ENCODE measurements at regions of chr5 and their contacts with region 1.

Region 1: GRCh38 chr5:139574641-139575312 is 13.6 kb downstream of the UBE2D2 start:
- DNase-seq: no peak
- H3K4me3 Mint-ChIP-seq: no peak overlapping the region
- H3K27ac Mint-ChIP-seq: no peak overlapping the region
- H3K4me1 Mint-ChIP-seq: peaks cover 74% of the 10 kb centered on the region
- H3K27me3 Mint-ChIP-seq: no peaks in the 10 kb centered on the region

Region 2: GRCh38 chr5:139501381-139501780 is 73.4 kb before region 1 on chr5:
- CTCF ChIA-PET with region 1: no interaction called
- intact Hi-C with region 1: no loop called
- DNase-seq: no peak
- H3K4me3 Mint-ChIP-seq: no peak overlapping the region
- H3K27ac Mint-ChIP-seq: no peak overlapping the region
- H3K4me1 Mint-ChIP-seq: no peaks in the 10 kb centered on the region
- H3K27me3 Mint-ChIP-seq: no peaks in the 10 kb centered on the region

Region 3: GRCh38 chr5:139588962-139589361 is 14.2 kb after region 1 on chr5:
- CTCF ChIA-PET with region 1: interaction called, 8 read pairs
- intact Hi-C with region 1: loop called (anchors 1 kb)
- DNase-seq: no peak
- H3K4me3 Mint-ChIP-seq: no peak overlapping the region
- H3K27ac Mint-ChIP-seq: no peak overlapping the region
- H3K4me1 Mint-ChIP-seq: peaks cover 67% of the 10 kb centered on the region
- H3K27me3 Mint-ChIP-seq: no peaks in the 10 kb centered on the region

Region 4: GRCh38 chr5:139611703-139612584 is 37.2 kb after region 1 on chr5:
- CTCF ChIA-PET with region 1: interaction called, 3 read pairs
- intact Hi-C with region 1: loop called (anchors 1 kb)
- DNase-seq: peak; percentile 64
- H3K4me3 Mint-ChIP-seq: no peak overlapping the region
- H3K27ac Mint-ChIP-seq: peak overlapping the region; percentile 81
- H3K4me1 Mint-ChIP-seq: peaks cover 36% of the 10 kb centered on the region
- H3K27me3 Mint-ChIP-seq: no peaks in the 10 kb centered on the region

Region 5: GRCh38 chr5:139711067-139711905 is 136.5 kb after region 1 on chr5:
- CTCF ChIA-PET with region 1: no interaction called
- intact Hi-C with region 1: loop called (anchors 5 kb)
- DNase-seq: peak; percentile 66
- H3K4me3 Mint-ChIP-seq: peak overlapping the region; percentile 62
- H3K27ac Mint-ChIP-seq: no peak overlapping the region
- H3K4me1 Mint-ChIP-seq: peaks cover 10% of the 10 kb centered on the region
- H3K27me3 Mint-ChIP-seq: peaks cover 2% of the 10 kb centered on the region

Measured in activated naive CD4-positive, alpha-beta T cell treated with anti-CD3 and anti-CD28 coated beads for 36 hours (primary cell).